ENCODE measurements at regions of chr12 and their contacts with region 1.

Region 1: GRCh38 chr12:121223292-121224285 is 13.7 kb downstream of the P2RX4 start:
- DNase-seq: peak; percentile 70
- H3K4me3 Mint-ChIP-seq: no peak overlapping the region
- H3K27ac Mint-ChIP-seq: peak overlapping the region; percentile 85
- H3K4me1 Mint-ChIP-seq: peaks cover 43% of the 10 kb centered on the region
- H3K27me3 Mint-ChIP-seq: no peaks in the 10 kb centered on the region

Region 2: DNA sequence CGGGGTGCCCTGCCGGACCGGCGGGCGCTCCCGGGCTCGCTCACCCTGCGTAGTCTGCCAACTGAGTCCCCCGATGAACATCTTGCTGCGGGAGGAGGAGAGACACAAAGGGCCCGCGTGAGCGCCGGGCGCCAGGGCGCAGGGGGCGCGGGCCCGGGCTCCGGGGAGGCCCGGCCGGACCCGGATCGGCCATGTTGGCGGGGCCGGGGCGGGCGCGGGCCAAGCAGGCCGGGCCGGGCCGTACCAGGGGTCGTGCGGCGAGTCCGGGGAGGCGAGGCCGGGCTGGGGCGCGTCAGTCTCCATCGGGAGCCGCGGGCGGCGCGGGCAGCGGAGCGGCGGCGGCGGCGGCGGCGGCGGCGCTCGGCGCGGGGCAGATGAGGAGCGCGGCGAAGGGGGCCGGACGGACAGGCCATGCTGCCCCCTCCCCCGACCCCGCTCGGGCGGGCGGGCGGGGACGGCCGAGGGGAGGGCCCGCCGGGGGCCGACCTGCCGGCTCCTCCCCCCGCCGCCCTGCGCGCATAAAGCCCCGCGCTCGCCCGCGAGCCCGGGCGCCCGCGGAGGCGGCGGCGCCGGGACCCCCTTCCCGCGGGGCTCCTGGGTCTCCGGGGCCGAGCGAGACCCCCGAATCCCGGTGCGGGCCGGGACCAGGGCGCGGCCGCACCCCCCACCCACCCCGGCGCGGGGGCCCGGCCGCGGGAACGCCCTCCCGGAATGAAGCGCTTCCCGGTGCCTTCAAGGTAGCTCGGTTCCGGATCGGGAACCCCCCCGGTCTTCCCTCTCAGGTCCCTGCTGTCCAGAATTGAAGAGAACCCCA is 854.6 kb before region 1 on chr12 and contains the start of gene MSI1:
- CTCF ChIA-PET with region 1: no interaction called
- POLR2A ChIA-PET with region 1: no interaction called
- intact Hi-C with region 1: no loop called
- DNase-seq: no peak
- H3K4me3 Mint-ChIP-seq: peak within 1 kb of the TSS; percentile 64
- H3K27ac Mint-ChIP-seq: no peak within 1 kb of the TSS
- H3K4me1 Mint-ChIP-seq: peaks cover 16% of the 10 kb centered on the region
- H3K27me3 Mint-ChIP-seq: peaks cover 66% of the 10 kb centered on the region
- total RNA-seq, gene MSI1: 1.5 to 2.7 TPM

Region 3: GRCh38 chr12:121209624-121210572 is 13.7 kb before region 1 on chr12 and contains the start of gene P2RX4:
- CTCF ChIA-PET with region 1: interaction called, 8 read pairs
- POLR2A ChIA-PET with region 1: interaction called, 17 read pairs
- intact Hi-C with region 1: loop called (anchors 1 kb)
- DNase-seq: peak; percentile 93
- H3K4me3 Mint-ChIP-seq: peak within 1 kb of the TSS; percentile 82
- H3K27ac Mint-ChIP-seq: peak within 1 kb of the TSS; percentile 87
- H3K4me1 Mint-ChIP-seq: peaks cover 35% of the 10 kb centered on the region
- H3K27me3 Mint-ChIP-seq: no peaks in the 10 kb centered on the region
- total RNA-seq, gene P2RX4: 53.4 to 57.5 TPM

Region 4: DNA sequence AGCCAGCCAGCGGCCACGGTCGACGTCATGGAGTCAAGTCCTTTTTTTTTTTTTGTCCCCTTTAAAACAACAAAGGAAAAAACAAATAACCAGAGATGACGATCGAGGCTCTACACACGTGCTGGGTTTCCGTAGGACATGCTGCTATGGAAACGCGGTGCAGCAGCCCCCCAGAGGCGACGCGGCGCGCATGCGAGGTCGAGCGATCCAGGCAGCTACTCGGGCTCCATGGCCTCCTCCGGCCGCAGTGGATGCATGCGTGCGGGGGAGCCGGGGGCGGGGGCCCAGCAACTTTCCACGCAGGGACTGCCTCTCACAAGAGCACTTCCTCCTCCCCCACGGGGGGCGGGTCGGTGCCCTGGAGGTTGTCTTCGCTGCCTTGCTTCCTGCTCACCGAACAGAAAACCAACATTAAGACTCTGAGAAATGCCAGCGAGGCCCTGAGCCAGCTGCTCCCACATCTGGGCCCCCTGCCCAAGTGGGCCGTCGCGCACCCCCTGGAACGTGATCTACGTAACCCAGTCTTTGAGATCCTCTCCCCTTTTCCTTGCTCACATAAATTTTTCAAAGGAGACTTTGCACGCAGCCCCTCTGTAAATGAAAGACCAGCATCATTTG is 17.0 kb after region 1 on chr12:
- CTCF ChIA-PET with region 1: interaction called, 12 read pairs
- POLR2A ChIA-PET with region 1: interaction called, 9 read pairs
- intact Hi-C with region 1: no loop called
- DNase-seq: peak; percentile 88
- H3K4me3 Mint-ChIP-seq: peak overlapping the region; percentile 57
- H3K27ac Mint-ChIP-seq: peak overlapping the region; percentile 79
- H3K4me1 Mint-ChIP-seq: peaks cover 32% of the 10 kb centered on the region
- H3K27me3 Mint-ChIP-seq: no peaks in the 10 kb centered on the region

Region 5: DNA sequence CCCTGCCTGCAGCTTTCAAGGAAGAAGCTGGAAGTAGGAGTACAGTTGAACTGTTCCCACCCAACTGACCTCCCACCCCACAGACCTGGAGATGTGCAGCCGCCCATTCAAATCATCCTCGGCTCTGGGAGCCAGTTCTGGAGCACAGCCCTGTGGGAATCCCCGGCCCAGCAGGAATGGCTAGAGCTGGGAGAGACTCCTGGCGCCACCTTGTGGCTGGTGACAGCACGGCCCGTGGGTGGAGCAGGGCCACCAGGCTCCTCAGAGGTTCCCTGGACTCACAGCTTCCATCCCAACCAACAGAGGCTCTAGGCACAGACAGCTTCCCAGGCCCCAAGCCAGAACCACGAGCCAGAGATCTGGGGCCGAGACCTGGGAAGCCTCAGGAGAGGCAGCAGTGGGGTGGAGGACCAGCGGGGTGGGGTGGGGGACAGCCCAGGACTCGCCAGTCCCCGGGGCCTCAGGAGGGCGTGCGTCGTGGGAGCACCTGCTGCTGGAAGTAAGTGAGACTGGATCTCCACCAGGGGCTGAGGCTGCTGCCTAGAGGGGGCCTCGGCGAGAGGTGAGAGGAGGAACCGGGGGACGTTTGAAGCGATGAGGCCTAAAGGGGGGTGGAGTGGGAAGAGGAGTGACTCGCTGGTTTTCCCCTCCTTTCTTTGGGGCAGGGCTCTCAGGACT is 219.7 kb after region 1 on chr12:
- CTCF ChIA-PET with region 1: no interaction called
- POLR2A ChIA-PET with region 1: no interaction called
- intact Hi-C with region 1: no loop called
- DNase-seq: peak; percentile 80
- H3K4me3 Mint-ChIP-seq: no peak overlapping the region
- H3K27ac Mint-ChIP-seq: no peak overlapping the region
- H3K4me1 Mint-ChIP-seq: peaks cover 2% of the 10 kb centered on the region
- H3K27me3 Mint-ChIP-seq: no peaks in the 10 kb centered on the region

Measured in activated CD4-positive, alpha-beta memory T cell treated with anti-CD3 and anti-CD28 coated beads for 36 hours (primary cell).